MCF 10A (cell line): ENCODE measurements at regions of chr17 and their contacts with region 1.

Region 1: DNA sequence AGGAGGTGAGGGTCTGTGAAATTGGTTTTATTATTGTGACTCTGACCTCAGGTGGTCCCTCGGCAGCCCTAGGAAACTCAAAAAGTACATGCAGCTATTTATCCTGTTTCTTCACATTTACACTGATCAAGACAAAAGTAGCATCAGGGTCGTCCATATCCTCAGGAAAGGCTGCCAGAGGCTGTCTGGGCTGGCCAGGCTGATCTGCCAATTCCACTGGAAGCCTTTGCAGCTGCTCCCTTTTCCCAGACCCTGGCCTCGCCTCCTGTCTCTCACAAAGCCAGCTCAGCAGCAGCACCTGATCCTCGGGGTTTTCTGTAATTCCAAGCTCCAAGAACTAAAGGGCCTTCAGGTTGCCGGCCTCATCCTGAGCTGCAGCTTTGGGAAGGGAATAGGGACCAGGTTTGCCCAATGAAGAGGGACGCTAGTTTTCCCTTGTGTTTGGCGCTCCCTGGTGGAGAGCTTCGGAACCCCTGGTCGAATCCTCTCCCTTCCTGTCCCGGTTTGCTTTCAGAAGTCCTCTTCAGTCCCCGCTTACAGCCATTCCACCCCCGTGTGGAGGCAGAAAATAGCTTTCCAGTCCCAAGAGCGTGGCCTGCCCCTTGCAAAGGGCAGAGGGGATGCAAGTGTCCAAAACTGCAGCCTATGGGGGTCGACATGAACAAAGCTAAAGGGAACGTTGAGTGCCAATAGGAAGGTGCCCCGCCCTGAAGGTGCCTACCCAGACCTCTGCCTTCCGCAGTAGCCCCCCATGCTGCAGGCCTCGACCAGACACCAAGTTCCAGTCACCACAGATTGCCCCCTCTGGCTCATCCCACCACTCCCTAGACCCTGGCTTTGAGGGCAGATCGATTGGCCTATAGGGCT is 13.4 kb downstream of the MFSD6L start:
- DNase-seq: peak; percentile 73
- H3K4me3 Mint-ChIP-seq: no peak overlapping the region
- H3K27ac Mint-ChIP-seq: no peak overlapping the region
- H3K4me1 Mint-ChIP-seq: no peaks in the 10 kb centered on the region
- H3K27me3 Mint-ChIP-seq: no peaks in the 10 kb centered on the region
- CTCF ChIP-seq: peak; percentile 77

Region 2: DNA sequence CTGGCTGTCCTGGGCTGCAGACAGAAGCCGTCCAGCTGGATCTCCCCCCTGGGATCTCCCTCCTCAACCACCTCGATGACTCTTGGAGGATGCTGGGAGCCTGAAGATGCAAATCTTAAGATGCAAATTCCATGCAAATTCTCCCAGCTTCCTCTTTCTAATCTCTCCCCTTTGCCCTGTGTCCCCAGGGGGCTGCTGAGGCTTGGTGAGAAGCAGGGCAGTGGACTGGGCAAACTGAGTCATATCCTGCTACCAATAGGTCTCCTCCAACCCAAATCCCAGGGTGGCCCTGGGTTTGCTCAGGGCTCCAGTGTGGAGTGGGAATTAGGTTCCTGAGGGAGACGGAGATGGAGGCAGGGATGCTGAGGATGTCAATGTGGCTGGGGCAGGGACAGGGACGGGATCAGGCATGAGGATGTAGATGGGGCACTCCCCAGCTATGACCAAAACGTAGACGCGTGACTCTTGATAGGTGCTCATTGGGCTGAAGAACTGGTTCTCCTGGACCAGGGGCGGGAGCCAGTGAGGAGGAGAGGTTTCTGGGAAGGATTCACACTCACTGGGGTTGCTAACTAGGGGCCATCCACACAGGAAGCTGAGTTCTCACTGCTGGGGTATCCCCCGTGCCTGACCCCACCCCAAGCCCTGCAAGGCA is 694.6 kb before region 1 on chr17:
- CTCF ChIA-PET with region 1: no interaction called
- POLR2A ChIA-PET with region 1: no interaction called
- intact Hi-C with region 1: no loop called
- DNase-seq: no peak
- H3K4me3 Mint-ChIP-seq: no peak overlapping the region
- H3K27ac Mint-ChIP-seq: no peak overlapping the region
- H3K4me1 Mint-ChIP-seq: peaks cover 5% of the 10 kb centered on the region
- H3K27me3 Mint-ChIP-seq: peaks cover 13% of the 10 kb centered on the region
- CTCF ChIP-seq: no peak

Region 3: DNA sequence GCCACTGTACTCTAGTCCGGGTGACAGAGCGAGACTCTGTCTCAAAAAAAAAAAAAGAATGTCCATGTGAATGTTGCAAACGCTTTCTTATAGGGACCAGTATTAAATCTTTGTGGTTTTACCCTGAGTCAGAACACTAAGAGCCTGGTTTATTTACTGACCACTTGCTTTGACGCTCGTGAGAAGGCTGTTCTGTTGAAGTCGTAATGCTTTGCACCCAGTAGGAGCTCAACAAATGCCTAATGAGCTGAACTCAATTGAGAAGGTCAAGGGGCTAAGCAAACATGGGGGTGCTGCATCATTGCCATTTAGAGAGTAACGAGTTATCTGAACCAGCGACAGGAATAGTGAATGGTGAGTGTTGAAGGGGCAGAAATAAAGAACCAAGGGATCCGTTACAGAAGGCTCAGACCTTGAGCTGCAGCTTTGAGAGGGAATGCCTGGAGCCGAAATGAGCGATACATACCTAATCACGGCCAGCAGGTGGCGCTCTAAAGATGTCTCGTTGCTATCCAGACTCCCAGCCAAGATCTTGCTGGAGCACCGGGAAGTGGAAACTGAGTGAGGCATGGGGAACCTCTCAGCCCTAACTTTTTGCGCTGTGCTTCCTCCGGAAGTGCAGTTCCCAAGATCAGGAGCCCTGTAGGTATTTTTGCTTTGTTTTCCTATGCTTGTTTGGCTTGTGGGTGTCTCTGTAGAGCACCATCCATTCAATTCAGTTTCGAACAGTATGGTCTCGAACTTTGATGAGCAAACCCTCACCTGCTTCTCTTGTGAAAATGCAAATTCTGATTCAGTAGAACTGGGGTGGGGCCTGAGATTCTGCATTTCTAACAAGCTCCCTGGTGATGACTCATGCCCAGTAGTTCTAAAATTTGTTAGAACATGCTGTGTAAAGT is 375.6 kb before region 1 on chr17:
- CTCF ChIA-PET with region 1: interaction called, 17 read pairs
- POLR2A ChIA-PET with region 1: interaction called, 3 read pairs
- intact Hi-C with region 1: loop called (anchors 1 kb)
- DNase-seq: peak; percentile 93
- H3K4me3 Mint-ChIP-seq: peak overlapping the region; percentile 60
- H3K27ac Mint-ChIP-seq: no peak overlapping the region
- H3K4me1 Mint-ChIP-seq: peaks cover 14% of the 10 kb centered on the region
- H3K27me3 Mint-ChIP-seq: no peaks in the 10 kb centered on the region
- CTCF ChIP-seq: peak; percentile 76

Region 4: DNA sequence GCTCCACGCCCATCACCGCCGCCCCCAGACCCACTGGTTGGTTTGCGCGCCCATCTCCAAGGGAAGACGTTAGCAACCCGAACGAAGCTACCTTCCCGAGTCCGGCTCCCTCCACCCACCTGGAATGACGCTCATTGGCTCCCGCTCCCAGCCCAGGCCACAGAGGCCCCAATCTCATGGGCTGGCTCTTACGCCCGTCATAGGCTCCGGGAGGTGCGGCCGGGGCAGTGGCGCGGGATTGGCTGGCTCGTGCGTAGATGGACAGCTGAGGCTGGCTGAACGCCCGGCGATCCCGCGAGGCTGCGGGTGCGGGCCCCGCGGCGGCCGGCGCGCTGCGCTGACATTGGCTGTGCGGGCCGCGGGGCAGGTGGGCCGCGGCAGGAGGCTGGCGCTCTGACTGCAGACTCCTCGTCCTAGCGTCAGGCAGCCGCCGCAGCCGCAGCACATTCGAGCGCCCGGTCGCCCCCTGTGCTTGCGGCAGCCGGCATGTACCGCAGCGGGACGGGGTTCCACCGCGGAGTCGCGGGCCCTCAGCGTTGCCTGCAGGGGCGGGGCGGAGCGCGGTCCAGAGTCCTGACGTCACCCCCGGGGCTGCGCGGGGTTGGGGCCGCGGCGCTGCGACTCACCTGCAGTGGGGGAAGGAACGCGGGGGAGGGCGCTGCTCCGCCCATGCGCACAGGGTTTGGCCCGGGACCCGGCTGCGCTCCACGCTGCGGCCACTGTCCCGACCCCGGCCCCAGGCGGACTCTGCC is 154.8 kb before region 1 on chr17:
- CTCF ChIA-PET with region 1: interaction called, 3 read pairs
- POLR2A ChIA-PET with region 1: no interaction called
- intact Hi-C with region 1: loop called (anchors 5 kb)
- DNase-seq: peak; percentile 100
- H3K4me3 Mint-ChIP-seq: peak overlapping the region; percentile 97
- H3K27ac Mint-ChIP-seq: peak overlapping the region; percentile 92
- H3K4me1 Mint-ChIP-seq: peaks cover 16% of the 10 kb centered on the region
- H3K27me3 Mint-ChIP-seq: no peaks in the 10 kb centered on the region
- CTCF ChIP-seq: peak; percentile 18

Region 5: GRCh38 chr17:8753976-8754440 is 31.8 kb before region 1 on chr17:
- CTCF ChIA-PET with region 1: interaction called, 16 read pairs
- POLR2A ChIA-PET with region 1: no interaction called
- intact Hi-C with region 1: loop called (anchors 1 kb)
- DNase-seq: peak; percentile 36
- H3K4me3 Mint-ChIP-seq: no peak overlapping the region
- H3K27ac Mint-ChIP-seq: no peak overlapping the region
- H3K4me1 Mint-ChIP-seq: no peaks in the 10 kb centered on the region
- H3K27me3 Mint-ChIP-seq: peaks cover 60% of the 10 kb centered on the region
- CTCF ChIP-seq: peak; percentile 22

Region 6: GRCh38 chr17:8798846-8799569 is 13.2 kb after region 1 on chr17 and contains the start of gene MFSD6L:
- CTCF ChIA-PET with region 1: interaction called, 15 read pairs
- POLR2A ChIA-PET with region 1: no interaction called
- intact Hi-C with region 1: no loop called
- DNase-seq: no peak
- H3K4me3 Mint-ChIP-seq: no peak within 1 kb of the TSS
- H3K27ac Mint-ChIP-seq: no peak within 1 kb of the TSS
- H3K4me1 Mint-ChIP-seq: no peaks in the 10 kb centered on the region
- H3K27me3 Mint-ChIP-seq: no peaks in the 10 kb centered on the region
- CTCF ChIP-seq: no peak
- total RNA-seq, gene MFSD6L: not detected in 2 replicates

Region 7: DNA sequence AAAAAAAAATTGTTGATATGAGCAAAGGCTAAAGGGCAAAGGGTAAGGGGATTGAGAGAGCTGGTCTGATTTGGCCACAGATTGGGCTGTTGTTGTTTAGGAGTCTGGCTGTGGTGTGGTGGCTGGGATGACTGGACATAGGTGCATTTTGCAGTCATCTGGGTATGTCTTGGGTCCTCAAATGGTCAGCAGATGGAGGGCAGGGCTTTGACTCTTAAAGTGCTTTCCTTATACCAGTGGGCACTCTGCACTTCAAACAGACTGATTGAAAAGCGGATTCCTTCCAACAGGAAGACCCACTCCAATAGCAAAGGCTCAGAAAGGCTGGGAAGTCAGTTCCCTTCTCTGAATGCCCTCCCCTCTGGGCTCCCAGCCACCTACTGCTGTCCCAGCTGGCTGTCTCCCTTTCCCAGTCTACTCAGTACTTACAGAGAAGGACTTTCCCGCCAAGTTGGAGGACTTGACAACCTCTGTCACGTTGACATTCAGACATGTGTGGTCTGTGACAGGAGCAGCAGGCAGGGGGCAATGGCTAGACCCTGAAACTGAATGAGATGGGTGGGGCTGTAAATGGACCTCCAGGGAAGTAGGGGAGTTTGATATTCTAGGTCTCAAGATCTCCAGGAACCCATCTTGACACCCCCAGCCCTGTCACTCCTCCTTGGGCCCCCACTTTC is 33.0 kb after region 1 on chr17:
- CTCF ChIA-PET with region 1: no interaction called
- POLR2A ChIA-PET with region 1: no interaction called
- intact Hi-C with region 1: no loop called
- DNase-seq: no peak
- H3K4me3 Mint-ChIP-seq: no peak overlapping the region
- H3K27ac Mint-ChIP-seq: no peak overlapping the region
- H3K4me1 Mint-ChIP-seq: no peaks in the 10 kb centered on the region
- H3K27me3 Mint-ChIP-seq: peaks cover 47% of the 10 kb centered on the region
- CTCF ChIP-seq: no peak